A673 (cell line): ENCODE measurements at regions of chr2 and their contacts with region 1.

Region 1: DNA sequence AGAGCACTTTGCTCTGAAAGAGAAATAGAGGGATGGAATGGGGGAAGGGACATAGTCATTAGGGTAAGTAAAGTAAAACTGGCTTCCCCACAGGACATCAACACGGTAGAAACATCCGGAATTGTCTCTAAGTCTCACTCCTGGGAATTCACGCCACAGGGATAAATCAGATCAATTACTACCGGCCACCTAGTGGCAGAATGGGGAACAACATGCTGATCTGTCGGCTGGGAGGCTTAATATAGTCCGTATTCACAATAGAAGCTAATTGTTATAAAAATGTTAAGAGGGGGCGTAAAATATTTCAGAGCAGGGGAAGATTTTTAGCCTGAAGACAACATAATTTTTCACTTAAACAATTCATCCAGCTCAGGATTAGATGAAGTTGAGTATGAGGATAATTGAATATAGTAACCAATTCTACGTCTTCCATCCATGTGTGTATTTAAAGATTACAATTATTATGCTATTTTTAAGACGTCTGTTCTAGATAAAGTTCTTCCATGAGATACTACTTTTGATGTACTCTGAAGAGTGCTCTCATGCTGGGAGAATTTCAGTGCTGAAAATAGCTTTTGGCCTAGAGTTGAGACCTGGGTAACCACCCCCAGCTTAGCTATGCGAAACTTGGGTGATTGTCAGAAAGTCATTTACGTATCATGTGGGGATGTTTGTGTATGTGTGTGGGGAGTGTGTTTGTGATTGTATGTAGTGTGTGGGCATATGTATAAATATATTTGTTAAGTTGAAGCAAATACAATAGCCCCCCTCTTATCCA is 65.7 kb downstream of the LRRTM1 start:
- DNase-seq: peak; percentile 63
- H3K4me3 ChIP-seq: no peak overlapping the region
- H3K27ac ChIP-seq: no peak overlapping the region
- H3K4me1 ChIP-seq: no peaks in the 10 kb centered on the region
- H3K27me3 ChIP-seq: peaks cover 2% of the 10 kb centered on the region
- CTCF ChIP-seq: peak; percentile 84

Region 2: DNA sequence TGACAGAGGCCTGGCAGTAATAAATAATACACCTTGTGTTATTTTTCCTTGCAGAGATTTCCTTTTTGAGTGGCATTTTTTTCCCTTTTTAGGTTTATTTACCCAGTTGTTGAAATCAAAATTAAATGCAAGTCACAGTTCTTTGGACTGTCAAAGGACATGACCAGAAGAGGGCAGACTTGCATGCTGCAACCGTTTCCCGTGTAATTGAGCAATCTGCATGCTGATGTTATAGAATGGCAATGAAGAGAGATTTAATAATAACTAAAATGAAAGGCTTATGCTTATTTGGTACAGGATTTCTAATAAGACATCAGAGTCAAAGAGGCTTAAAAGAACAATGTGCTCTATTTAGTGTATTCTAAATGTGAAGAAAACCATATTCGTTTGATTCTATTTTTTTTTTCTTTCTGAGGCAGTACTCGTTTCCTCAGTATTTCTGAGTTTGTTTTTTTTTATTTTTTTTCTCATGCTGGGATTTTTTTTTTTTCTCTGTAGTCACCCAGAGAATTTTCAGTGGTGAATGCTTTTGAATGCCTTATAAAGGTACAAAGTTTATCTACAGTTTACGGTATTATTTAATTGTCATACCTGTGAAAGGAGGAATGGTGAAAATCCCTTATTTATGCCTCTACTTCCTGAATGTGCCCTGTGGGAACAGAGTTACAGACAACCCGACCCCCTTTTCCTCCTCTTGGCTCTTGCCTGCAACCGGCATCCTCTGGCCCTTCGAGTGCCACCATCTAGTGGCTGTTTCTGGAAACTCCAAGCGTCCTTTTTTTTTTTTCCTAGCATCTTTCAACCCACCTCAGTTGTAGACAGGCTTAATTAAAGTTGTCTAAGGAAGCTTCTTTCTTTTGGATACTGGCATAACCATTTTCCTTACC is 302.9 kb before region 1 on chr2:
- CTCF ChIA-PET with region 1: no interaction called
- POLR2A ChIA-PET with region 1: no interaction called
- intact Hi-C with region 1: loop called (anchors 5 kb)
- DNase-seq: peak; percentile 77
- H3K4me3 ChIP-seq: no peak overlapping the region
- H3K27ac ChIP-seq: no peak overlapping the region
- H3K4me1 ChIP-seq: no peaks in the 10 kb centered on the region
- H3K27me3 ChIP-seq: peaks cover 17% of the 10 kb centered on the region
- CTCF ChIP-seq: peak; percentile 76

Region 3: GRCh38 chr2:80073134-80073561 is 165.7 kb before region 1 on chr2:
- CTCF ChIA-PET with region 1: no interaction called
- POLR2A ChIA-PET with region 1: no interaction called
- intact Hi-C with region 1: loop called (anchors 1 kb)
- DNase-seq: peak; percentile 79
- H3K4me3 ChIP-seq: no peak overlapping the region
- H3K27ac ChIP-seq: no peak overlapping the region
- H3K4me1 ChIP-seq: no peaks in the 10 kb centered on the region
- H3K27me3 ChIP-seq: no peaks in the 10 kb centered on the region
- CTCF ChIP-seq: peak; percentile 72

Region 4: GRCh38 chr2:80086831-80087230 is 152.1 kb before region 1 on chr2:
- CTCF ChIA-PET with region 1: no interaction called
- POLR2A ChIA-PET with region 1: no interaction called
- intact Hi-C with region 1: loop called (anchors 5 kb)
- DNase-seq: peak; percentile 87
- H3K4me3 ChIP-seq: no peak overlapping the region
- H3K27ac ChIP-seq: no peak overlapping the region
- H3K4me1 ChIP-seq: peaks cover 12% of the 10 kb centered on the region
- H3K27me3 ChIP-seq: no peaks in the 10 kb centered on the region
- CTCF ChIP-seq: peak; percentile 22; the same call in 1 of the 2 replicates